GM10248 (cell line): ENCODE measurements at regions of chr2 and their contacts with region 1.

Region 1: GRCh38 chr2:9914384-9915065 is 37.0 kb upstream of the GRHL1 start:
- DNase-seq: peak; percentile 71
- CTCF ChIP-seq: peak; percentile 53

Region 2: GRCh38 chr2:9843229-9844035 is 71.1 kb before region 1 on chr2 and contains the start of gene TAF1B:
- CTCF ChIA-PET with region 1: interaction called, 11 read pairs
- POLR2A ChIA-PET with region 1: no interaction called
- DNase-seq: peak; percentile 94
- CTCF ChIP-seq: no peak

Region 3: DNA sequence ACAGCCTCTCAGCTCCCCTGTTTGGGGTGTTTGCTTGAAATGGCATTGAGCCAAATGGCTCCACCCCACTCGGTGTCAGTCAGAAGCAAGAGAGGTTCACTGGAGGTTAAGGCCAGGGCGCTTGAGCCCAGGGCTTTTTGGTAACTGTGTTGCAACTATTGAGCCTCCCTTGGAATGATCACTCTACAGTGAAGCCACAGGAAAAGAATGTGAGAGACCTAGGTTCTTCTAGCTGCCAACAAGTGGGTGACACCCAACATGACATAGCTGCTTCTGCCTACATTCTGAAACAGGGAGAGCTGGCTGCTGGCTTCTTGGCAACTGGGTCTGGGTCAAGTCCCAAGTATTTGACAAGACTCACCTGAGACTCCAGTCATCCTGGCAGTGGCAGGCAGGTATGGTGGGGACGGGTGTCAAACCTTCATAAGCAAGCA is 29.8 kb after region 1 on chr2:
- CTCF ChIA-PET with region 1: no interaction called
- POLR2A ChIA-PET with region 1: no interaction called
- DNase-seq: no peak
- CTCF ChIP-seq: no peak

Region 4: GRCh38 chr2:10003206-10004125 is 88.9 kb after region 1 on chr2:
- CTCF ChIA-PET with region 1: no interaction called
- POLR2A ChIA-PET with region 1: no interaction called
- DNase-seq: no peak
- CTCF ChIP-seq: no peak